OCI-LY7 (cell line): ENCODE measurements at regions of chr6 and their contacts with region 1.

Region 1: DNA sequence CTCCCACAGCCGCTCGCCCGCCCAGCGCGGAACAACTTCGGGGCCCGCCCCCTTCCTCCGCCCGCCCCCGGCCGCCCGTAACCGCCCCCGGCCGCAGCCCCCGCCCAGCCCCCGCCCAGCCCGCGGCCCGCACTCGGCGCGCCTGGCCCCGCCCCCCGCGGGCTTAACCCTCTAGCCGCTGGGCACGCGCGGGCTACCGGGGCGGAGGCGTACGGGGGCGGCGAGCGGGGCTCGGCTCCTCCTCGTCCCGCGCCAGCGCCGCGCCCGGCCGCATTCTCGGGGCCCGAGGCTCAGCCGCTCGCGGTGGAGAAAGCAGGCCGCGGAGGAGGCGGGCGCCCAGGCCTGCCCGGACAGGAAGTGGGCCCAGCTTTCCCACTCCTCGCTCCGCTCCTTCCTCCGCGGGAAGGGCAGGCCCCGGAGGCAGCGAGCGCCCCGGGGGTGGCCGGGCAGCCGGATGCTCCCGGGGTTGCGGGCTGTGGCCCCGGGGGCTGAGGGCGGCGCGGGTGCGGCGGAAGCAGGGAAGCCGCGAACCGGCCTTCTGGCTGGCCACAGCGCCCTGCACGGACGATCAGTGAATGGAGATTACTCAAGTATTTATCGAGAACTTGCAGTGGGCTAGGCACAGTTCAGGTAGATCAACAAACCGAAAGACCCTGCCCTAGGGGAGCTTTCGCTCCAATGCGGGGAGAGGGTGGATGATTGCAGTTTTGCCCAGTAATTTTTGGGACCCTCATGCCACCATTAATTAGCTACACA is at the start of gene TRAM2:
- DNase-seq: peak; percentile 90
- H3K4me3 ChIP-seq: peak within 1 kb of the TSS; percentile 75
- H3K27ac ChIP-seq: peak within 1 kb of the TSS; percentile 68
- H3K4me1 ChIP-seq: peaks cover 42% of the 10 kb centered on the region
- CTCF ChIP-seq: peak; percentile 53
- total RNA-seq, gene TRAM2: 16.3 and 19.3 TPM in 2 replicates

Region 2: DNA sequence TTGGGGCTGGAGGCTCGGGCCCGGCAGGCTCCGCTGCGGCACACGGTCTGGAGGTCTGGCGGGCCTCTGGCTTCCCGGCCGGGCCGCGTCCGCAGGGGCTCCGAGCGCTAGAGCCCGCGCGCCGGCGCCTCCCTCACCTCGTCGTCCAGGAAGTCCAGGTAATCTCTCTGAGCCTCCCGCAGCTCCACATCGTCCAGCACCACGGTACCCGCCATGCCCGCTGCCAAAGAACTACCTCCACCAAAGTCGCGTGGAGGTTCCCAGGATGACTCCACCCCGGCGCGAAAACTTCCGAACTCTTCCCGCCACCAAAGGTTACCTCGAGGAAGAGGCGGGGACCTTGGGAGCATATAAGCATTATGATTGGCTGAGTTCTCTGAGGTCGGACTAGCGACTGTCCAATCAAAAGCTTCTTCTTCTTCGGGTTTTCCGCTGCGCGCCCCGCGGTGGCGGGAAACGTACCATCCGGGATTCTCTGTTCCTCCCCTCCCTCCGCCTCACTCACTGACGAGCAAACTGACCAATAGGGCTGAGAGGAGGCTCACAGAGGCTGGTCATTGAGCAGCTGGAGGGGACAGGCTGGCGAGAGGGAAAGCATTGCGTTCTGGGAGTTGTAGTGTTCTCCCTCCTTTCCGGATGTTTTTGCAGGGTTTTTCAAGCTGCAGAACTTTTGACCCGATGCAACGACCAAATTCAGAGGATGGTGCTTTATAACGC is 292.6 kb before region 1 on chr6 and contains the start of gene MCM3:
- CTCF ChIA-PET with region 1: no interaction called
- POLR2A ChIA-PET with region 1: interaction called, 3 read pairs
- intact Hi-C with region 1: loop called (anchors 5 kb)
- DNase-seq: peak; percentile 100
- H3K4me3 ChIP-seq: peak within 1 kb of the TSS; percentile 85
- H3K27ac ChIP-seq: peak within 1 kb of the TSS; percentile 90
- H3K4me1 ChIP-seq: peaks cover 59% of the 10 kb centered on the region
- CTCF ChIP-seq: no peak
- total RNA-seq, gene MCM3: 272 and 356 TPM in 2 replicates

Region 3: DNA sequence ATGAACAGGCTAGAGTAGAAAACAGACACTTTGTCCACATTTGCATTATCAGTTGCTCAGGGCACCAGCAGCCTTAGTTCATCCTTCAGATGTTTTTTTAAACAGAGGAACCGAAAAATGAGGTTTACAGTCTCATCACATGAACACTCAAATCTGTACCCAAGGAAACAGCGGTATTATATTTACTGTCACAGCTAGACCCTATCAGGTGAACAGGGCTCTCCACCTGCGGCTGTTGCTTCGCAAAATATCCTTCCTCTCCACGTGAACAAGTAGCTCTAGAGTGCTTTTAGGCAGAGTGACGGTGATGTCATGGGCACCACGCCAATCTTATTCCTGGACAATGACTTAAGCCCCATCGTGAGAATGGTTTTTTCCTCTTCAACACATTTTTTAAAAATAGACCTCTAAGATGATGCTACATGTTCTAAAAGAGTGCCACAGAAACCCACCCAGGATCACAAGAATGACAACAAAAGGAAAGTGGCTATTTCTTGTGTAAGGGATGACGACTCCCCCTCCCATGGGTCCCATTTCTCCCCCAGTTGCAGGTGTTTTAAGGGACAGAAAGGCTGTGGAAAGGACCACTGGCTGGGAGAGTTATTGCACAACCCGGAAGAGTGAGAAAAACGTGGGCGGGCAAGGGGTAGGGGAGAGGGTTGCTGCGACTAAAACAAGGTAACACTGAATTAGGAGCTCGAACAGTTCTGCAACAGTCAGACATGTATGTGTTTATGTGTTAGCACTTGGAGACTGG is 79.4 kb before region 1 on chr6:
- CTCF ChIA-PET with region 1: no interaction called
- POLR2A ChIA-PET with region 1: interaction called, 24 read pairs
- intact Hi-C with region 1: loop called (anchors 1 kb)
- DNase-seq: peak; percentile 95
- H3K4me3 ChIP-seq: peak overlapping the region; percentile 59
- H3K27ac ChIP-seq: peak overlapping the region; percentile 99
- H3K4me1 ChIP-seq: peaks cover 75% of the 10 kb centered on the region
- CTCF ChIP-seq: no peak

Region 4: GRCh38 chr6:52537001-52537753 is 40.0 kb before region 1 on chr6:
- CTCF ChIA-PET with region 1: interaction called, 4 read pairs
- POLR2A ChIA-PET with region 1: interaction called, 5 read pairs
- intact Hi-C with region 1: loop called (anchors 1 kb)
- DNase-seq: peak; percentile 81
- H3K4me3 ChIP-seq: peak overlapping the region; percentile 55
- H3K27ac ChIP-seq: peak overlapping the region; percentile 95
- H3K4me1 ChIP-seq: peaks cover 79% of the 10 kb centered on the region
- CTCF ChIP-seq: no peak

Region 5: DNA sequence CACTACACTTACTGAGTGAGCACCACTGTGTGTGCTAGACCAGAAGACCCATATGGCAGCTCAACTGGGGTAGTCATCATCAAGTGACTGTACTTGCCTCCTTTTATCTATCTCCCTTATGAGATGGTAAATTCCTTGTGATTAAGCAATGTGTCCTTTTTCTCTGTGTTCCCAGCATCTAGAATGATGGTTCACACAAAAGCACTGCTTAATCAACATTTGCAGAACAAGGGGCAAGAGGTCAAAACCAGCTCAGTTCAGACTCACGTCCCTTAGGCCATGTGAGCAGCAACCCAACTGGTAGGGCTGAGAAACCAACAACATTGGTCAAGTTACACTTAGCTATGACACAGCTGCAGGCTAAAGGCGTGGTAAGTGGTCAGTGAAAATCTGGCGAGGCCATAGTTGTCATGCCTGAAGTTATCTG is 10.3 kb before region 1 on chr6:
- CTCF ChIA-PET with region 1: no interaction called
- POLR2A ChIA-PET with region 1: interaction called, 19 read pairs
- intact Hi-C with region 1: no loop called
- DNase-seq: no peak
- H3K4me3 ChIP-seq: peak overlapping the region; percentile 31
- H3K27ac ChIP-seq: no peak overlapping the region
- H3K4me1 ChIP-seq: peaks cover 74% of the 10 kb centered on the region
- CTCF ChIP-seq: no peak

Region 6: GRCh38 chr6:52647199-52647598 is 70.0 kb after region 1 on chr6:
- CTCF ChIA-PET with region 1: no interaction called
- POLR2A ChIA-PET with region 1: interaction called, 4 read pairs
- intact Hi-C with region 1: loop called (anchors 1 kb)
- DNase-seq: no peak
- H3K4me3 ChIP-seq: no peak overlapping the region
- H3K27ac ChIP-seq: no peak overlapping the region
- H3K4me1 ChIP-seq: peaks cover 4% of the 10 kb centered on the region
- CTCF ChIP-seq: no peak